Endothelial cell of umbilical vein (primary cell): ENCODE measurements at regions of chr14 and their contacts with region 1.

Region 1: GRCh38 chr14:60628892-60629291 is 20.4 kb downstream of the SIX1 start:
- DNase-seq: no peak
- H3K4me3 ChIP-seq: no peak overlapping the region
- H3K27ac ChIP-seq: no peak overlapping the region
- H3K4me1 ChIP-seq: peaks cover 10% of the 10 kb centered on the region
- H3K27me3 ChIP-seq: peaks cover 0 to 3% of the 10 kb centered on the region in 2 experiments
- CTCF ChIP-seq: no peak
- POLR2A ChIP-seq: no peak

Region 2: GRCh38 chr14:60931218-60931617 is 302.3 kb after region 1 on chr14:
- CTCF ChIA-PET with region 1: no interaction called
- POLR2A ChIA-PET with region 1: no interaction called
- dilution Hi-C with region 1: no loop called
- intact Hi-C with region 1: loop called (anchors 5 kb)
- DNase-seq: no peak
- H3K4me3 ChIP-seq: no peak overlapping the region
- H3K27ac ChIP-seq: no peak overlapping the region
- H3K4me1 ChIP-seq: no peaks in the 10 kb centered on the region
- H3K27me3 ChIP-seq: no peaks in the 10 kb centered on the region
- CTCF ChIP-seq: no peak
- POLR2A ChIP-seq: no peak